MCF 10A (cell line): ENCODE measurements at regions of chr17 and their contacts with region 1.

Region 1: DNA sequence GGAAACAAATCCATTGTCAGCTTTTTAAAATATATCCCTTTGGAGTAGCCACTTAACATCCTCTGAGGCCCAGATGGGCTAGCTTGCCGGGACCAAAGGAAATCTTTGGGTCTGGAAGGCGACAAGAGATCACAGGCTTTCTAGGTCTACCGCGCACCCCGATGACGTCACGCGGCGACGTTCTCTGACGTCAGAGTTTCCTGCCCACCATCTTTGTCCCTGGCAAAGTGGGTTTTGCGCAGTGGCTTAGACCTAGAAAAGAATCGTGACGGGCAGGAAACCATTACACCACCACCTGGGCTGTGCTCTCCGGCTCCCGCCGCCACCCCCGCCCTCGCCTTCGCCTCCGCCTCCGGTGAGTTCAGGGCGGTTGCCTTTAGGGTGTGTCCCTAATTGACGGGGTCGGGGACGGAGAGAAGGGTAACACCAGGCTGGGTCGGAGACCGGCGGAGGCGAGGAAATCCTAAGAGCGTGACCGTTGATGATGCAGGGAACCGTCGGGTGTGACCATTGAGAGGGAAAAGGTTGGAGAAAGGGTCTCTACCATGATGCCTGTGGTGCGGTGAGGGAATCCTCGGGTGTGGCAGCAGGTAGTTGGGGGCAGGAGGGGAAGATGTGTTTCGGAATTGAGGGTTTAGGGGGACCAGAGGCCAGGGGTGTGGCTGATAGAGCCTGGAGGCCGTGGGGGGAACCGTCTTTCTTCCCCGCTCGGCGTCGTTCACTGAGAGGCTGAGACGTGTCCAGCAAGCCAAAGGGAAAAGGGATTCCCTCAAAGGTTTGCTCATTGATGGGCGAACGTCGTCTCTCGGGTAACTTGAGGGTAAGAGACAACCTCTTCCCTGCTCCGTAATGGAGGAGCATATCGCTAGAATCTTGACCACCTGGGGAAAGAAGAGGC is at the start of gene AP2B1:
- DNase-seq: peak; percentile 95
- H3K4me3 Mint-ChIP-seq: peak within 1 kb of the TSS; percentile 97
- H3K27ac Mint-ChIP-seq: peak within 1 kb of the TSS; percentile 99
- H3K4me1 Mint-ChIP-seq: peaks cover 18% of the 10 kb centered on the region
- H3K27me3 Mint-ChIP-seq: no peaks in the 10 kb centered on the region
- CTCF ChIP-seq: no peak
- total RNA-seq, gene AP2B1: 227 and 229 TPM in 2 replicates

Region 2: DNA sequence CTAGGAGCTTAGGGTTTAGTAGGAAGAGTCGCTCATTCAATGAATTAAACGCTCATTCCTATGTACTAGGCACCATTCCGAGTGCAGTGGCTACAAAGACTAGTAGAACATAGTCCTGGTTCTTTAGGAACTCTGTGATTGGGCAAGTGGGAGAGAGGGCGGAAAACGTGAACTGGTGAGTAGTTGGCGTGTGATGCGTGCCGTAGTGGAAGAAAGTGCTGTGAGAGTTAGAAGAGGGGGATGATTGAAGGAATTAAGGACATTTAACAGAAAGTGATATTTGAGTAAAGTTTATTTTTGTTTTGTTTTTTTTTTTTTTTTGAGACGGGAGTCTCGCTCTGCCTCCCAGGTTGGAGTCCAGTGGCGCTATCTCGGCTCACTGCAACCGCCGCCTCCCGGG is 18.8 kb before region 1 on chr17:
- CTCF ChIA-PET with region 1: interaction called, 3 read pairs
- POLR2A ChIA-PET with region 1: interaction called, 56 read pairs
- intact Hi-C with region 1: no loop called
- DNase-seq: peak; percentile 57
- H3K4me3 Mint-ChIP-seq: peak overlapping the region; percentile 77
- H3K27ac Mint-ChIP-seq: peak overlapping the region; percentile 65
- H3K4me1 Mint-ChIP-seq: peaks cover 22% of the 10 kb centered on the region
- H3K27me3 Mint-ChIP-seq: peaks cover 18% of the 10 kb centered on the region
- CTCF ChIP-seq: no peak

Region 3: DNA sequence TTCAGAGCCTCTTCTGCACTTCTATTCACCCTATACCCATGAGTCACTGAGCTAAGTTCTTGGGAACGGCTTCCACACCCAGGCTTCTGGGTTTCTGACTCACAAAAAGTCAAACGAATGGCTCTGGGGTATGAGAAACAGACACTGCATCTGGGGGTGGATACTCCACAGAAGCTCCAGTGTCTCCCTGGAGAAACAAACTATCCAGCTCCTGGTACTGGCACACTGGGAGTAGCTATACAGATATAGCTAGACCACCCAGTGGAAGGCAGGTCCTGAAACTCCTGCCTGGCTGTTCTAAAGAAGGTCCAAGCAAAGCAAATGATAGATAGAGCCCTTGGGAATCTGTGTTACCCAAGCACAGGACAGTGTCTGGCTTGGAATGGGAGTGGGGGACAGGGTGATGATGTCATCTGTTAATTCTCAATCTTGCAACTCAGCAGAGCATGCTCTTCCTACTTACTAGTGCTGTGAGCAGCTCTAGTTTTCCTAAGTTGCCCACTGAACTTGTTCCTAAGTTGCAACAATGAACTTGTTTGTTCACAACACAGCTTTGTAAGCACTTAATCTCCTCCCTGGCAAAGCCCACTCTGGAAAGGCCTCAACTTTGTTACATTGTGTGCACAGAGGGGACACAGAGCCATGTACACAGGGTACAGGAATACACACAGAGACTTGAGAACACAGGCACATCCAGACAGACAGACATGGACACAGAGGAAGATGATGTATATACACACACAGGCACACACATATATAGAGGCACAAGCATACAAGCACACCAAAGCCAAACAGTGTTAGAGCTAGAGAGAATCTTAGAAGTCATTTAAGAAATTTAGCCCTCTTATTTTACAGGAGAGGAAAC is 201.4 kb after region 1 on chr17:
- CTCF ChIA-PET with region 1: no interaction called
- POLR2A ChIA-PET with region 1: interaction called, 13 read pairs
- intact Hi-C with region 1: no loop called
- DNase-seq: peak; percentile 95
- H3K4me3 Mint-ChIP-seq: peak overlapping the region; percentile 52
- H3K27ac Mint-ChIP-seq: peak overlapping the region; percentile 85
- H3K4me1 Mint-ChIP-seq: peaks cover 59% of the 10 kb centered on the region
- H3K27me3 Mint-ChIP-seq: no peaks in the 10 kb centered on the region
- CTCF ChIP-seq: no peak